Endothelial cell of umbilical vein (primary cell): ENCODE measurements at regions of chr2 and their contacts with region 1.

Region 1: GRCh38 chr2:238426568-238427434 is at the start of gene ASB1:
- DNase-seq: peak; percentile 66
- H3K4me3 ChIP-seq: peak within 1 kb of the TSS; percentile 26 to 46 (median 45)
- H3K27ac ChIP-seq: peak within 1 kb of the TSS; percentile 87
- H3K4me1 ChIP-seq: peaks cover 13% of the 10 kb centered on the region
- H3K27me3 ChIP-seq: no peaks in the 10 kb centered on the region
- CTCF ChIP-seq: no peak
- POLR2A ChIP-seq: peak; percentile 69
- total RNA-seq, gene ASB1: 16.2 and 16.7 TPM in 2 replicates

Region 2: GRCh38 chr2:238256594-238257104 is 170.2 kb before region 1 on chr2:
- CTCF ChIA-PET with region 1: no interaction called
- POLR2A ChIA-PET with region 1: no interaction called
- dilution Hi-C with region 1: no loop called
- intact Hi-C with region 1: loop called (anchors 10 kb)
- DNase-seq: peak; percentile 80
- H3K4me3 ChIP-seq: no peak overlapping the region
- H3K27ac ChIP-seq: no peak overlapping the region
- H3K4me1 ChIP-seq: no peaks in the 10 kb centered on the region
- H3K27me3 ChIP-seq: no peaks in the 10 kb centered on the region
- CTCF ChIP-seq: peak; percentile 91 to 93
- POLR2A ChIP-seq: no peak

Region 3: GRCh38 chr2:238379096-238379810 is 47.5 kb before region 1 on chr2:
- CTCF ChIA-PET with region 1: no interaction called
- POLR2A ChIA-PET with region 1: no interaction called
- dilution Hi-C with region 1: no loop called
- intact Hi-C with region 1: loop called (anchors 1 kb)
- DNase-seq: peak; percentile 62
- H3K4me3 ChIP-seq: no peak overlapping the region
- H3K27ac ChIP-seq: peak overlapping the region; percentile 67
- H3K4me1 ChIP-seq: peaks cover 43% of the 10 kb centered on the region
- H3K27me3 ChIP-seq: no peaks in the 10 kb centered on the region
- CTCF ChIP-seq: no peak
- POLR2A ChIP-seq: no peak

Region 4: DNA sequence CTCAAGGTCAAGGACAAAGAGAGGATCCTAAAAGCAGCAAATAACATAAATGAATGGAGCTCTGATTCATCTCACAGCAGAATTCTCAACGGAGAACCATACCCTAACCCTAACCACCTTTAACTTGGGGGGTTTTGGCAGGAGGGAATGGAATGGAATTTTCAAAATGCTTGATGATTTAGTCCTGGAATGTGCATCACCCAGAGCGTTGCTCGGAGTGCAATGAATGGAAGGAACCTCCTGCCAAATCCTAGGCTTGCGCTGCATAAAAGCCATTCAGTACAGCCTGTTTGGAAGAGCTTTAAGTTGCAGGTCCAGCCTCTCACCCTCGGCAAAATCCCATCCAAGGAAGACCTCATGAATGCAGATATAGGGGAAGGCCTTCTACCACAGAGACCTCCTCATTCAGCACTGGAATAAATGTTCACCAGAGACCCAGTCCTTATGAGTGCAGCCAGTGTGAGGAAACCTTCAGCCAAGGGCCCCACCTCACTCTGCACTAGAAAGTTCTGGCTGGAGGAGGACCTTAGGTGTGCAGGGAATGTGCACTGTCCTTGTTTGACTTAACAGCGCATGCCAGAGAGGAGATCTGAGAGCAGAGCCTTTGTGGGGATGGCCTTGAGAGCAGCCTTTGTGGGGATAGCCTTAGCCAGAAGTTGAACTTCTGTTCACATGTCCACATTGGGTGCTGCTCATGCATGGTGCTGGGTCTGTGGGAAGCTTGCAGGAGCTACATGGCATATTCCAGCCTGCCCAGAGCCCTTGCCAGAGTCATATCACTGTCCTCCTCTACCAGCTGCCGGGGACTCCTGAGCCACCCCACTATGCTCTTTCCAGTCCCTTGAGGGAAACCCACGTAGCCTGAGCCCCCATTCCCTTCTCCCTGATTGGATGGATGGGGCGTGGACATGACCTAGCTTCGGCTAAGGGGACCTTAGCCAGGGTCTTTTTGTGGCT is 30.4 kb after region 1 on chr2:
- CTCF ChIA-PET with region 1: interaction called, 6 read pairs
- POLR2A ChIA-PET with region 1: no interaction called
- dilution Hi-C with region 1: no loop called
- intact Hi-C with region 1: loop called (anchors 1 kb)
- DNase-seq: no peak
- H3K4me3 ChIP-seq: no peak overlapping the region
- H3K27ac ChIP-seq: no peak overlapping the region
- H3K4me1 ChIP-seq: no peaks in the 10 kb centered on the region
- H3K27me3 ChIP-seq: peaks cover 0 to 2% of the 10 kb centered on the region in 2 experiments
- CTCF ChIP-seq: no peak
- POLR2A ChIP-seq: no peak

Region 5: GRCh38 chr2:238670111-238670585 is 243.3 kb after region 1 on chr2:
- CTCF ChIA-PET with region 1: no interaction called
- POLR2A ChIA-PET with region 1: no interaction called
- dilution Hi-C with region 1: no loop called
- intact Hi-C with region 1: no loop called
- DNase-seq: no peak
- H3K4me3 ChIP-seq: no peak overlapping the region
- H3K27ac ChIP-seq: no peak overlapping the region
- H3K4me1 ChIP-seq: no peaks in the 10 kb centered on the region
- H3K27me3 ChIP-seq: no peaks in the 10 kb centered on the region
- CTCF ChIP-seq: no peak
- POLR2A ChIP-seq: no peak

Region 6: GRCh38 chr2:238714038-238714528 is 287.3 kb after region 1 on chr2:
- CTCF ChIA-PET with region 1: no interaction called
- POLR2A ChIA-PET with region 1: no interaction called
- dilution Hi-C with region 1: no loop called
- intact Hi-C with region 1: no loop called
- DNase-seq: no peak
- H3K4me3 ChIP-seq: no peak overlapping the region
- H3K27ac ChIP-seq: no peak overlapping the region
- H3K4me1 ChIP-seq: no peaks in the 10 kb centered on the region
- H3K27me3 ChIP-seq: no peaks in the 10 kb centered on the region
- CTCF ChIP-seq: no peak
- POLR2A ChIP-seq: no peak

Region 7: GRCh38 chr2:239193925-239194677 is 767.3 kb after region 1 on chr2:
- CTCF ChIA-PET with region 1: no interaction called
- POLR2A ChIA-PET with region 1: no interaction called
- dilution Hi-C with region 1: no loop called
- intact Hi-C with region 1: no loop called
- DNase-seq: no peak
- H3K4me3 ChIP-seq: no peak overlapping the region
- H3K27ac ChIP-seq: no peak overlapping the region
- H3K4me1 ChIP-seq: no peaks in the 10 kb centered on the region
- H3K27me3 ChIP-seq: no peaks in the 10 kb centered on the region
- CTCF ChIP-seq: no peak
- POLR2A ChIP-seq: no peak